OCI-LY7 (cell line): ENCODE measurements at regions of chr6 and their contacts with region 1.

Region 1: DNA sequence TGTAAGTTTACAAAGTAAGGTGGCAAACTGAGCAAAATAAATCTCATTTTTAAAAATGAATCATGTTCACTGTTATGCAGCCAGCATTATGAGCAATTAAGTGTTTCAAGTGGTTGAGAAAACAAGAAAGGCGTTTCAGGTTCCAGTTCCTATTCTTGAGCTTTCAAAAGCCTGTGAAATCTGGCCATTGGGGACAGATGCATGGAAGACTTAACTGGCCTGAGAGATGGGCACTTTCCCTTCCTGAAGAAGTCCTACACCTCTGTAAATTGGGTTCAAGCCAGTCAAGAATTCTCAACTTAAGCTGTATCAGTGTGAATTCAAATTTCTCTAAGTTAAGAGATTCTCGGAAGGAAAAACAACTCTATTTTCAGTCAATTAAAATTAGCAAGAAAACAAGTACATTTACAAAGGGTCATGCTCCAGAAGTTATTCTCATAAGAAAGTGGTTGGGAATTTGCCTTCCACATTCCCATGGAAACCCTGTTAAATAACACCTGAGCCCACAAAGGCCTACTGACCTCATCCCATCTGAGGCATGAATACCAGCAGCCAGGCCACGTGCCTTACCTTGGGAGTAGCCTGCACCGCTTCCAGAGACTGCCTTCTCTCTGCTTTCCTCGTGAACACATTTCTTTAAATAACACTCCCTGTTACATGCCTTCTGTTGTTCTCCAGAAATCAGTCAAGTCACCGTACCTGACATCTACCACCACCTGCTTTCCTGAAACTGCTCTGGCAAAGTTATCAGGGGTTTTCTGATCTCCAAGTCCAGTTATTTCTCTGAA is 19.4 kb downstream of the MAP3K5 start:
- DNase-seq: peak; percentile 45
- H3K4me3 ChIP-seq: no peak overlapping the region
- H3K27ac ChIP-seq: peak overlapping the region; percentile 23
- H3K4me1 ChIP-seq: peaks cover 32% of the 10 kb centered on the region
- CTCF ChIP-seq: no peak

Region 2: DNA sequence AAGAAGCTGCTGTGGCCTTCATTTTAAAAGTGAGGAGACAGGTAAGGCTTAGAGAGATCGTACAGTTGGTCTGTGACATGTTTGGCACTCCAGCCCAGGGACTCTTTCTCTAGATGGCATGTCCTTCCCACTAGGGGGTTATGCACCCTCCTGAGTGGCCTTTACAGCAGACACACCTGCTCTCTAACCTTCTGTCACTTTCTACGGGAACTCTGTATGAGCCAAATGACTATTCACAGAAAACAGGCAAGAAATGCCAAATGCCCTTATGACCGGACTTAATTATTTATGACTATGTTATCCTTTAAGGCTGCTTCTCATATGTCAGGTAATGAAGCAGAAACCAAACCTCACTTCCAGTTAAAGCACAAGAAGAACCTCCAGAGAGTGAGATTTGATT is 71.8 kb before region 1 on chr6:
- CTCF ChIA-PET with region 1: no interaction called
- POLR2A ChIA-PET with region 1: no interaction called
- intact Hi-C with region 1: no loop called
- DNase-seq: no peak
- H3K4me3 ChIP-seq: no peak overlapping the region
- H3K27ac ChIP-seq: no peak overlapping the region
- H3K4me1 ChIP-seq: peaks cover 12% of the 10 kb centered on the region
- CTCF ChIP-seq: no peak

Region 3: DNA sequence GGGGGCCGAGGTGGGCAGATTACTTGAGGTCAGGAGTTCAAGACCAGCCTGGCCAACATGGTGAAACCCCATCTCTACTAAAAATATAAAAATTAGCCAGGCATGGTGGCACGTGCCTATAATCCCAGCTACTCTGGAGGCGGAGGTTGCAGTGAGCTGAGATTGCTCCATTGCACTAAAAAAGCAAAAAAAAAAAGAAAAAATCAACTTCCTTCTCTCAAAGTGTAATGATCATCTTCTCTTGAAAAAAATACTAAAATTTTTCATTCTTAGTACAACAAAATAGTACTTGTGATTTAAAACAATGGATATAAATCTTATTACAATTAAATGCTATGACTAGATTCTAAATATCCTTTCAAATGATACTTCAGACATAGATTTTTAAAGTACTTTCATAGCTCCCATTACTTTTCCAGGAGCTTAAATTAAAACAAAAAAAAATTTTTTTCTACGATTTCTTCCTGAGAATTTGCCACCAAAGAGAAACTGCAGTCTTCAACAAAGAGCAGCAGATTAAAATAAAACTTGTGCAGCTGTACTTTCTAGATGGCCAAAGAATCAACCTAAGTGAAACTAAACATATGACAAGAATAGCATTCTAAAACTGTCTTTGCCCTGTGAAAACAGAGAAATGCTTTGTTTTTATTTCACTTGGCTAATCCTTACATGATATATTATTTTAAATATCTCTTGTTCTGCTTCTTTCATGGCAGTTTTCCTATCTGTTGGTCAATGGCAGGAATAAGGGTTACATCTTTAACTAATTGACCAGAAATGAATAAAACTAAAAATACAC is 55.8 kb before region 1 on chr6:
- CTCF ChIA-PET with region 1: interaction called, 3 read pairs
- POLR2A ChIA-PET with region 1: interaction called, 12 read pairs
- intact Hi-C with region 1: no loop called
- DNase-seq: peak; percentile 72
- H3K4me3 ChIP-seq: peak overlapping the region; percentile 59
- H3K27ac ChIP-seq: peak overlapping the region; percentile 93
- H3K4me1 ChIP-seq: peaks cover 54% of the 10 kb centered on the region
- CTCF ChIP-seq: no peak

Region 4: GRCh38 chr6:136737871-136738691 is 34.8 kb before region 1 on chr6:
- CTCF ChIA-PET with region 1: no interaction called
- POLR2A ChIA-PET with region 1: no interaction called
- intact Hi-C with region 1: no loop called
- DNase-seq: no peak
- H3K4me3 ChIP-seq: no peak overlapping the region
- H3K27ac ChIP-seq: no peak overlapping the region
- H3K4me1 ChIP-seq: peaks cover 16% of the 10 kb centered on the region
- CTCF ChIP-seq: no peak

Region 5: DNA sequence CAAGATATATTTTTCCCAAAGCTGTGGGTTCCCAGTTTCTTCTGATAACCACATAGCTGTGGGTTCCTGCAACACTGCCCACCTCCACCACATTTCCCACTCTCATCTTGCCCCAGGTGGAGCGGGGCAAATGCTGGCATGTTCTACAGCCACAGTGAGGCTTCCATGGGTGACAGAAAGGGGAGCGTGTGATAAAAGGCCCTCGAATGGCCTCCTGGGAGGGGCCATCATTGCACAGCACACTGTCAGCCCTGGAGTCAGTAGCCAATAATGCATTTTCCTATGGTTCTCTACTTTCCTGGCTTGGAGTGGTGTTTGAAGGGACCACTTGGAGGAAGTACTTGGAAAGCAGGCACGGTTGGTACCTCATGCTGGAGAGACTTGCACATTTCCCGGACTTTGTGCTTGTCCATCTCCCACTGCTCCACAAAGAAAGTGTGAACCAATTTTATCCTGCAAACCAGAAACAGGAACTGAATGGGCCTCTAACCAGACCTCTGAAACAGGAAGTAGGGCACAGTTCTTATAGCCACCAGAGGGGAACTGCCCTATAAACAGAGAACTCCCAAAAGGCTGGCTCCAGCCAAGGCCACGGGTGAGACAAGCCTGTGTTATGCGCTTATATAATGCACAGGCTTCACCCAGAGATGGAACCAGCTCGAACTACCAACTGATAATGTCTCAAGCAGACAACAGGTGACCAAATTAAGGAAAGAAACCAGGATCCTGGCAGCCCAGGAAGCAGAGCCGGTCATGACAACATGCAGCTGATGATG is 10.8 kb after region 1 on chr6:
- CTCF ChIA-PET with region 1: no interaction called
- POLR2A ChIA-PET with region 1: interaction called, 16 read pairs
- intact Hi-C with region 1: no loop called
- DNase-seq: peak; percentile 84
- H3K4me3 ChIP-seq: peak overlapping the region; percentile 67
- H3K27ac ChIP-seq: peak overlapping the region; percentile 61
- H3K4me1 ChIP-seq: peaks cover 54% of the 10 kb centered on the region
- CTCF ChIP-seq: peak; percentile 23; the same call in 1 of the 2 replicates

Region 6: DNA sequence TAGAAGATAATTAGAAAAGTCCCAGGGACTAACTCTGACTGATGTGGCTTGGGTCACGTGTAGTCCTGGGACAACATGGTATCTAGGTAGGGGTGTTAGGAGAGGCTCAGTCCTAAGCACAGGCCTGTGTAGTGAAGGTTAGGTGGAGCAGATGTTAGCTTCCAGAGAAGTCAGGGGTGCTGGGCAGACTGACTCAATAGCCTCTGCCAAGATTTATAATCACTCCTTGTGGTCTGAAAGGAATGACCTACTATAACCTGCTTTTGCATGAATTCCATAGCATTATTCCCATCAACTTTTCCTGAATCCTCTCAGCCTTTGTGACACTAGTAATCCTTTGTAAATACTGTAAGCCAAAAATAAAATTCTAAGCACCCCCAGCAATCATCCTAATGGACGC is 39.3 kb after region 1 on chr6:
- CTCF ChIA-PET with region 1: no interaction called
- POLR2A ChIA-PET with region 1: no interaction called
- intact Hi-C with region 1: no loop called
- DNase-seq: no peak
- H3K4me3 ChIP-seq: no peak overlapping the region
- H3K27ac ChIP-seq: no peak overlapping the region
- H3K4me1 ChIP-seq: no peaks in the 10 kb centered on the region
- CTCF ChIP-seq: no peak

Region 7: DNA sequence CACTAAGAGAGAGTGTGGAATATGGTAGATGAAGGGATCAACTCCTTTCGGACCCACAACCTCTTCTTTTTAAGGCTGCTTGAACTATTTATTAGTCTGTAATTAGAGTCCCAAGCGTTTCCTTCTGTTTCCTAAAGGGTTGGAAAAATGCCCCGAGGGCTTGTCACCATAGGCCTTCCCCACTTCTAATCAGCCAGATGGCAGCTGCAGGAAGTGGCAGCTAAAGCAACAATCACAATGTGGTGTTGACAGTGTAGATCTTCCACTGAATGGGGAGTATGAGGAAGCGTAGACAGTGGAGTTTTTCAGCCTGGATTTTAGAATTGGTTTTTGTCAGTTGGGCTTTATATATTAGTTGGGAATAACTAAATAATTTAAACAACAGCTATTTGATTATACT is 189.8 kb after region 1 on chr6:
- CTCF ChIA-PET with region 1: no interaction called
- POLR2A ChIA-PET with region 1: no interaction called
- intact Hi-C with region 1: no loop called
- DNase-seq: no peak
- H3K4me3 ChIP-seq: no peak overlapping the region
- H3K27ac ChIP-seq: no peak overlapping the region
- H3K4me1 ChIP-seq: no peaks in the 10 kb centered on the region
- CTCF ChIP-seq: no peak